CD8-positive, alpha-beta T cell (primary cell): ENCODE measurements at regions of chr5 and their contacts with region 1.

Region 1: GRCh38 chr5:122845229-122846050 is at the start of gene SNX24:
- DNase-seq: peak; percentile 31 to 86 (median 70)
- ATAC-seq: peak; percentile 83
- H3K4me3 ChIP-seq: peak within 1 kb of the TSS; percentile 62 to 67
- H3K4me3 Mint-ChIP-seq: peak within 1 kb of the TSS; percentile 90
- H3K27ac ChIP-seq: peak within 1 kb of the TSS; percentile 35 to 71
- H3K27ac Mint-ChIP-seq: peak within 1 kb of the TSS; percentile 79
- H3K4me1 ChIP-seq: peaks cover 11% of the 10 kb centered on the region
- H3K4me1 Mint-ChIP-seq: peaks cover 27% of the 10 kb centered on the region
- H3K27me3 ChIP-seq: no peaks in the 10 kb centered on the region
- H3K27me3 Mint-ChIP-seq: peaks cover 9% of the 10 kb centered on the region
- CTCF ChIP-seq: no peak
- total RNA-seq, gene SNX24: 0.33 to 0.87 TPM

Region 2: DNA sequence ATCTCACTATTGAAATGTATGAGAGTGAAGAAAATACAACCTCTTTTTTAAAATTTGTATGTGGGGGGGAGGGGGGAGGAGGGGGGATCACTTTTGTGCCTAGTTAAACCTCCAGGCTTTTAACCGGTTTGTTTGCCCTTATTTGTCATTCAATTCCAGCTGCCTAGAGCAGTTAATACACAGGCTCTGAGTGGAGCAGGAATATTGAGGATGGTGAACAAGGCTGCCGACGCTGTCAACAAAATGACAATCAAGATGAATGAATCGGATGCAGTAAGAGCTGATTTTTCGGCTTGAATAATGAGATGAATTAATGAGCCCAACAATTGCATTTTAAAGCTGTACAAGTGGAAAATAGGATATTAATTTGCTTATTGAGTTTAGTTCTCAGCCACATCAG is 28.7 kb before region 1 on chr5:
- CTCF ChIA-PET with region 1: no interaction called
- POLR2A ChIA-PET with region 1: interaction called, 10 read pairs
- intact Hi-C with region 1: no loop called
- DNase-seq: no peak
- ATAC-seq: no peak
- H3K4me3 ChIP-seq: no peak overlapping the region
- H3K4me3 Mint-ChIP-seq: no peak overlapping the region
- H3K27ac ChIP-seq: no peak overlapping the region
- H3K27ac Mint-ChIP-seq: no peak overlapping the region
- H3K4me1 ChIP-seq: no peaks in the 10 kb centered on the region
- H3K4me1 Mint-ChIP-seq: no peaks in the 10 kb centered on the region
- H3K27me3 ChIP-seq: no peaks in the 10 kb centered on the region
- H3K27me3 Mint-ChIP-seq: no peaks in the 10 kb centered on the region
- CTCF ChIP-seq: no peak